Mammary epithelial cell (primary cell): ENCODE measurements at regions of chr2 and their contacts with region 1.

Region 1: GRCh38 chr2:158903711-158904443 is 64.6 kb upstream of the TANC1 start:
- DNase-seq: no peak
- H3K4me3 ChIP-seq: no peak overlapping the region
- H3K27ac ChIP-seq: no peak overlapping the region
- H3K4me1 ChIP-seq: no peaks in the 10 kb centered on the region
- H3K27me3 ChIP-seq: no peaks in the 10 kb centered on the region
- CTCF ChIP-seq: no peak

Region 2: GRCh38 chr2:157420771-157421323 is 1483.0 kb before region 1 on chr2:
- CTCF ChIA-PET with region 1: no interaction called
- dilution Hi-C with region 1: no loop called
- in situ Hi-C with region 1: no loop called
- intact Hi-C with region 1: no loop called
- DNase-seq: peak; percentile 5
- H3K4me3 ChIP-seq: no peak overlapping the region
- H3K27ac ChIP-seq: no peak overlapping the region
- H3K4me1 ChIP-seq: no peaks in the 10 kb centered on the region
- H3K27me3 ChIP-seq: peaks cover 3% of the 10 kb centered on the region
- CTCF ChIP-seq: no peak

Region 3: DNA sequence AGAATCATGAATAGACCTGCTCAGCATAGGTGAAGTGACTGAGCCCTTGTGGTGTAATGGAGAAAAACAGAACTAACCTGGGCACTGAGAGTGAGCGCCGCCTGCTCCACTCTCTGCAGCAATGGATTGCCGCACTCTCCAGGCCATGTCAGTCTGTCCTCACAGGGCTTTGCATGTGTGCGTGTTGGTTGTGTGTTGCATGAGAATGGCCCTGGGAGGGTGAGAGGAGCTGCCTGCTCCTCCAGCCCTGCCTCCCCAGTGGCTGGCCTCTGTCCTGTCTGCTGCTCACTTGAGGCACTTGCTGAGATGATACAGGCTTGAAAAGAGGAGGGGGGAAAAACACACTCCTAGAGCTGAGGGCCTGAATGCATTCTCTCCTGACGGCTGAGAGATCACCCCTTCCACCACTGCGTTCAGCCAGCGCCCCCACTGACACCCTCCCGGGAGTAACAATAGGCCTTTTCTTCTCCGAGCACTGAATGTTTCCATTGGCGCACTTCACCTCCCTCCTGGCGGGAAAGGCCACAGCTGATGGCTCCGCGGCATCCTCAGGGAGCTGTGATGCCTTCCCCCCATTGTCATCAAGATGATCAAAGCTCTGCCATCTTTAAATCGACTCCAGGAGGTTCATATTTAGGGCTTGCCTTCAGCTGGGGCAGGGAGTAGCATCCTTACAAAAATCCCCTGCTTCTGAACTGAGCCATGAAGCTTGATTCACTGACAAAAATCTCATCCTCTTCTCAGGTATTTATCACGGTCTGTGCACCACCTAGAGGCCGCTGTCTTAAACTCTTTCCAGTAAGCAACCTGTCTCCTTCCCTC is 158.6 kb before region 1 on chr2:
- CTCF ChIA-PET with region 1: no interaction called
- dilution Hi-C with region 1: no loop called
- in situ Hi-C with region 1: no loop called
- intact Hi-C with region 1: no loop called
- DNase-seq: peak; percentile 51
- H3K4me3 ChIP-seq: no peak overlapping the region
- H3K27ac ChIP-seq: no peak overlapping the region
- H3K4me1 ChIP-seq: no peaks in the 10 kb centered on the region
- H3K27me3 ChIP-seq: no peaks in the 10 kb centered on the region
- CTCF ChIP-seq: peak; percentile 68 to 69

Region 4: GRCh38 chr2:158948964-158949699 is 45.3 kb after region 1 on chr2:
- CTCF ChIA-PET with region 1: no interaction called
- dilution Hi-C with region 1: no loop called
- in situ Hi-C with region 1: no loop called
- intact Hi-C with region 1: no loop called
- DNase-seq: no peak
- H3K4me3 ChIP-seq: no peak overlapping the region
- H3K27ac ChIP-seq: no peak overlapping the region
- H3K4me1 ChIP-seq: peaks cover 8% of the 10 kb centered on the region
- H3K27me3 ChIP-seq: no peaks in the 10 kb centered on the region
- CTCF ChIP-seq: no peak

Region 5: DNA sequence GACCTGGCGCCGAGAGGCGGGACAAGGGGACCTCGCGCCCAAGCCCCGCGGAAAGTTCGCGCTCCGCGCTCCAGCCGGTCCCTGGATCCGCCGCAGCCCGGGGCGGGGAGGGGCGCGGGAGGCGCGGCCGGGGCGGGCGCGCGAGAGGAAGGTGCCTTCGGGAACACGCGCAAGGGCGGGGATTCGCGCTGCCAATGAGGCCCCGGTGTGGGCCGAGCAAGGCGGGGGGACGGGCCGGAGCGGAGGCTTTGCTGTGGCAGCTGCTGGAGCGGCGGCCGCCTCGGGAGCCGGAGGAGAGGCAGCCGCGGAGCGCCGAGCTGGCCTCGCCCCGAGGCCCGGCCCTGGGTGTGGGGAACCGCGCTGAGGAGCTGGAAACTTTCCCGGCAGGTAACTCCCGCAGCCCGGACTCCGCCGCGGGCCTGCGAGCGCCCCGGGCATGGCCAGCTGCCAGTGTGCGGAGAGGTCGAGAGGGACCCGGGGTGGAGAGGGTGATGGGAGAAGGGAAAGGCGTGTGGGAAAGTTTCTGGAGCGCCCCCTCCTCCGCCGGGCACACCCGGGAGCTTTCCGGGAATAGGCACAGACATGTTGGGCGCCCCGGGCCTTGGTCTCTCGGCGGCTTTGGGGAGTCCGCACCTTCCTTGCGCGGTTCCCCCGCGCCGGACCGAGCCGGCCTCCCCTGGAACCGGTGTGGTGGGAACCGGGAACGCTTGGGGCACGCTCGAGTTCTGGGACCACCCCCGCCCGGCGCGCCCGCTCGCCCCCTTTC is 64.7 kb after region 1 on chr2 and contains the start of gene TANC1:
- CTCF ChIA-PET with region 1: no interaction called
- dilution Hi-C with region 1: no loop called
- in situ Hi-C with region 1: loop called in 1 of 2 experiments (anchors 5 kb)
- intact Hi-C with region 1: loop called (anchors 1 kb)
- DNase-seq: peak; percentile 93
- H3K4me3 ChIP-seq: peak within 1 kb of the TSS; percentile 88 to 90 (median 90)
- H3K27ac ChIP-seq: peak within 1 kb of the TSS; percentile 83
- H3K4me1 ChIP-seq: peaks cover 44% of the 10 kb centered on the region
- H3K27me3 ChIP-seq: no peaks in the 10 kb centered on the region
- CTCF ChIP-seq: no peak
- total RNA-seq, gene TANC1: 46.6 to 51.5 TPM

Region 6: GRCh38 chr2:159035790-159036411 is 132.0 kb after region 1 on chr2:
- CTCF ChIA-PET with region 1: no interaction called
- dilution Hi-C with region 1: no loop called
- in situ Hi-C with region 1: no loop called
- intact Hi-C with region 1: loop called (anchors 1 kb)
- DNase-seq: peak; percentile 86
- H3K4me3 ChIP-seq: no peak overlapping the region
- H3K27ac ChIP-seq: no peak overlapping the region
- H3K4me1 ChIP-seq: peaks cover 9% of the 10 kb centered on the region
- H3K27me3 ChIP-seq: no peaks in the 10 kb centered on the region
- CTCF ChIP-seq: peak; percentile 56 to 76

Region 7: DNA sequence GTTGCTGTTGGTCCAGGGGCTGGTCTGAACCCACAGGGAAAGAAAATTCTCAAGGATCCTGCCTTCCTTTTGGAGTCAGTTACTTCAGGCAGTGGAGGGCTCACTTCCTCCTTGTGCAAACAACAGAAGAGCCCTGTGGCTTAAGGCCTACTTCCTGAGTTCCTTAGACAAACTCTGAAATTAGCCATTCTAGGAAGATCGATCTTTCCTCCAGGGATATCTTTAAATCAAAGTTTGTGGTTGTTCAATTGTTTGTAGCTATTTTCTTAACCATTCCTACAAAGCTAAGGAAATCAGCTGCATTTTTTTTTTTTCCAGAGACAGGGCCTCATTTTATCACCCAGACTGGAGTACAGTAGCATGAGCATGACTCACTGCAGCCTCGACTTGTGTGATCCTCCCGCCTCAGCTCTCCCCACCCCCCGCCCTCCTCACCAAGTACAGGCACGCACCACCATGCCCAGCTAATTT is 220.6 kb after region 1 on chr2:
- CTCF ChIA-PET with region 1: no interaction called
- dilution Hi-C with region 1: no loop called
- in situ Hi-C with region 1: loop called (anchors 5 to 10 kb)
- intact Hi-C with region 1: no loop called
- DNase-seq: peak; percentile 89
- H3K4me3 ChIP-seq: no peak overlapping the region
- H3K27ac ChIP-seq: peak overlapping the region; percentile 70
- H3K4me1 ChIP-seq: peaks cover 33% of the 10 kb centered on the region
- H3K27me3 ChIP-seq: no peaks in the 10 kb centered on the region
- CTCF ChIP-seq: no peak

Region 8: DNA sequence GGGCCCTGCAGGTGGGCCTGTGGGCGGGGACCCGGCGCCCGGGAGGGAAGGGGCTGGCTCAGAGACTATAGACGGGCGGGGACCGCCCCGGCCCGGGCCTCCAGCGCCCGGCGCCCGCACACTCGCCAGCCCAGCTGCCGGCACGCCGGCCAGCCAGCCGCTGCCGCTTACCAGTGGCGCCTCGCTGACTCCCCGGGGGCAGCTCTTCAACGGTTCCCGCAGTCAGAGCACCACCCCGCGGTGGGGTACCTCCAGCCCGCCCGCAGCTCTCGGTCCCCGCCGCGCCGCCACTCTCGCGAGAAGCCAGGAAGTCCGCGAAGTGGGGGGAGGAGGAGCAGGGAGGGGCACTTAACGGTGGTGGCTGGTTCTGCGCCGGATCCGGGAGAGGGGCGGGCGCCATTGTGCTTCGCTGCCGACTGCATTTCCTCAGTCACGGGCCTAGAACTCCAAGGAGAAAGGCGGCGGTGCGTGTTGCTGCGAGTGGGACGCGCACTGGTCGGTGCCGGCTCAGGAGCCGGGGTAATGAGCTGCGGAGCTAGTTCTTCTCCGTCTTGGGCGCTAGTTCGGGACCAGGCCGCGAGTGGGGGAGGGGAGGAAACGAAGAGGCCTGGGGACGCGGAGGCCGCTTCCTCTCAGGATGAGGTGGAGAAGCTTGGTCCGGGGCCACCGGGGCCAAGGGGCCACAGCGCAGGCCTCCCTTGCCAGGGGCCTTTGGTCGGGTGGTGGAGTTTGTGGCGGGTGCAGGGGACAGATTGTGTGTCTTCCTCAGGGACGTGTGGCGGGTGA is 808.5 kb after region 1 on chr2 and contains the start of gene MARCHF7:
- CTCF ChIA-PET with region 1: no interaction called
- dilution Hi-C with region 1: no loop called
- in situ Hi-C with region 1: no loop called
- intact Hi-C with region 1: loop called (anchors 5 kb)
- DNase-seq: peak; percentile 97
- H3K4me3 ChIP-seq: peak within 1 kb of the TSS; percentile 70 to 87 (median 85)
- H3K27ac ChIP-seq: peak within 1 kb of the TSS; percentile 88
- H3K4me1 ChIP-seq: peaks cover 24% of the 10 kb centered on the region
- H3K27me3 ChIP-seq: no peaks in the 10 kb centered on the region
- CTCF ChIP-seq: peak; percentile 60 to 82
- total RNA-seq, gene MARCHF7: 84.3 to 121 TPM